ENCODE measurements at regions of chr18 and their contacts with region 1.

Region 1: DNA sequence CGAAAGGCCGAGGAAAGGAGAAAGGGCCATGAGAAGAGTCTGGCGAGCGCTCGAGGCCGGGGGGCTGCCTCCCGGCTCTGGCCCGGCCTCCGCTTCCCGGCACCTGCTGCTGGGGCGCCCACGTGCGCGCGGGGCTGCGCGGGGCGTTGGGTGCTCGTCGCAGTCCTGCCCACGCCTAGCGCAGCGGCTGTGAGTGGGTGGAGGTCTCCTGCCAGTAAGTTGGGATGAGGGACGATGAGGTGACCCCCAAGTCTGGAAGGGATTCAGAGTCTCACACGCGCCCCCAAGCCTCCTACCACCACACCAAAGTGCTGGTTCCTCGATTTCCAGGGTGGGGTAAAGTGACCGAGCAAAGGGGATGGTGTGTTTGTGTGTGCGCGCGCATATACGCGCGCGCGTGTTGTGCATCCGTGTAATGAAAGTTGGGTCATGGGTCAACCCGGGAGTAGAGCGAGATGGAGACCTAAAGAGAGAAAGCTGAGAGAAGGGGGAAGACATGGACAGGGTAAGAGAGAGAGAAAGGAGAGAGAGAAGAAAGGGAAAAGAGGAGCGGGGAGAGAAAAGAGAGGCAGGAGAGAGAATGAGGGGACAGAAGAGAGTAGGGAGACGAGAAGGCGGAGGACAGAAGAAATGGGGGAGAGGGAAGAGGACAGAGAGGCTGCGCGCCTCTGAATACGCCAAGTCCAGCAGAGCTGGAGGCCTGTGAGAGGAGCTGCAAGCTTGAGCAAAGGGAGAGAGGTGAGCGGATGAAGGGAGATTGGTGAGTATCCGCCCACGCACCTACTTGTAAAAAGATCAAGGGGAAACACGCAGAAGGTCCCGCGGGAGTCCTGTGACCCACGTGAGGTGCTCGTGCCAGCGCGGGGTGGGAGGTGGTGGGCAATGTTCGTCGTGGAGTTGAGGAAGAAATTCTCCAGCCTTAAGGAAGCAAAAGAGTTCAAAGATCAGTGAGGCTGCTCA is 1.7 kb upstream of the NETO1 start:
- DNase-seq: no peak
- ATAC-seq: no peak
- H3K4me3 ChIP-seq: peak overlapping the region in 10 of 12 donors; percentile 17 to 53 (median 46)
- H3K27ac ChIP-seq: no peak overlapping the region
- H3K4me1 ChIP-seq: peaks cover 0 to 29% (median 5%) of the 10 kb centered on the region in 12 donors
- H3K27me3 ChIP-seq: peaks cover 24 to 56% (median 40%) of the 10 kb centered on the region in 9 donors
- CTCF ChIP-seq: no peak
- POLR2A ChIP-seq: no peak

Region 2: GRCh38 chr18:72811047-72811446 is 58.5 kb before region 1 on chr18:
- intact Hi-C with region 1: loop called in 1 of 10 experiments (anchors 10 kb)
- DNase-seq: no peak
- ATAC-seq: no peak
- H3K4me3 ChIP-seq: no peak overlapping the region
- H3K27ac ChIP-seq: no peak overlapping the region
- H3K4me1 ChIP-seq: no peaks in the 10 kb centered on the region
- H3K27me3 ChIP-seq: no peaks in the 10 kb centered on the region
- CTCF ChIP-seq: no peak
- POLR2A ChIP-seq: no peak

Measured in heart left ventricle (tissue), 16 donors.